ENCODE measurements at regions of chrX and their contacts with region 1.

Region 1: GRCh38 chrX:107672955-107673378 is 44.7 kb downstream of the PRPS1 start:
- DNase-seq: peak; percentile 87
- ATAC-seq: peak; percentile 52
- H3K4me3 Mint-ChIP-seq: peak overlapping the region; percentile 53
- H3K27ac Mint-ChIP-seq: peak overlapping the region; percentile 85
- H3K4me1 Mint-ChIP-seq: peaks cover 43% of the 10 kb centered on the region
- H3K27me3 Mint-ChIP-seq: no peaks in the 10 kb centered on the region

Region 2: DNA sequence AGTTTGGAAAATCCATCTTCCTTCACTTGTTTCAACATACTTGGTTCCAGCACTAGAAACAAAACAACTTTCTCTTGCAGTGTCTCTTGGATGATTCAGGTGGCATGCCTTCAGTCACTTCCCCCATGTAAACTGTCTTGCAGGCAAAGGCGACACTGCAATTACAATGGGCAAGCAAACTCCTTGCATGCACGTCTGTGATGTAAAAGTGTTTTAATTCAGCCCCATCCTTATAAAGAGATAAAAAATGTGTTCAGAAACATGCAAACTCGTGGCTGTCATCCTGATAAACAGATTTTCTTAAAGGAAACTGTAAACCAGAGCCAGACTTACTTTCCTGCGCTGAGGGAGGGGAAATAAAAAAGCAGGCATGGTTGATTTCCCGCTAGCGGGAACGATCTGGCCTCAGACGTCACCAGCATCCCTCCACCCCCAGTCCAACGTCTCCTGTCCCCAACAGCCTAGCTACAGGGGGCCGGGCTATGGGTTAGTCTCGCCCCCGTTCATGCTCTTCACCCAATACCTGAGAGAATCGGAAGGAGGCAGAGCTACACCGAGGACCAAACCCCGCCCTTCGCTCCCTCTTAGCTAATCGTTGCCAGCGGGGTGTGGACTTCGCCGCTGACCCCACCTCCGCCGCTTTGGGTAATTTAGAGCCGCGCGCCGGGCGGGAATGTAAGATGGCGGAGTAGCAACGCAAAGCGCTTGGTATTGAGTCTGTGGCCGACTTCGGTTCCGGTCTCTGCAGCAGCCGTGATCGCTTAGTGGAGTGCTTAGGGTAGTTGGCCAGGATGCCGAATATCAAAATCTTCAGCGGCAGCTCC is 44.9 kb before region 1 on chrX and contains the start of gene PRPS1:
- CTCF ChIA-PET with region 1: interaction called, 4 read pairs
- POLR2A ChIA-PET with region 1: interaction called, 20 read pairs
- intact Hi-C with region 1: loop called in 1 of 2 experiments (anchors 1 kb)
- DNase-seq: peak; percentile 93
- ATAC-seq: peak; percentile 99
- H3K4me3 Mint-ChIP-seq: peak within 1 kb of the TSS; percentile 89
- H3K27ac Mint-ChIP-seq: peak within 1 kb of the TSS; percentile 93
- H3K4me1 Mint-ChIP-seq: peaks cover 27% of the 10 kb centered on the region
- H3K27me3 Mint-ChIP-seq: no peaks in the 10 kb centered on the region
- total RNA-seq, gene PRPS1: 112 to 141 TPM

Region 3: GRCh38 chrX:107662145-107662544 is 10.8 kb before region 1 on chrX:
- CTCF ChIA-PET with region 1: interaction called, 11 read pairs
- POLR2A ChIA-PET with region 1: no interaction called
- intact Hi-C with region 1: no loop called
- DNase-seq: no peak
- ATAC-seq: no peak
- H3K4me3 Mint-ChIP-seq: no peak overlapping the region
- H3K27ac Mint-ChIP-seq: no peak overlapping the region
- H3K4me1 Mint-ChIP-seq: peaks cover 2% of the 10 kb centered on the region
- H3K27me3 Mint-ChIP-seq: no peaks in the 10 kb centered on the region

Region 4: DNA sequence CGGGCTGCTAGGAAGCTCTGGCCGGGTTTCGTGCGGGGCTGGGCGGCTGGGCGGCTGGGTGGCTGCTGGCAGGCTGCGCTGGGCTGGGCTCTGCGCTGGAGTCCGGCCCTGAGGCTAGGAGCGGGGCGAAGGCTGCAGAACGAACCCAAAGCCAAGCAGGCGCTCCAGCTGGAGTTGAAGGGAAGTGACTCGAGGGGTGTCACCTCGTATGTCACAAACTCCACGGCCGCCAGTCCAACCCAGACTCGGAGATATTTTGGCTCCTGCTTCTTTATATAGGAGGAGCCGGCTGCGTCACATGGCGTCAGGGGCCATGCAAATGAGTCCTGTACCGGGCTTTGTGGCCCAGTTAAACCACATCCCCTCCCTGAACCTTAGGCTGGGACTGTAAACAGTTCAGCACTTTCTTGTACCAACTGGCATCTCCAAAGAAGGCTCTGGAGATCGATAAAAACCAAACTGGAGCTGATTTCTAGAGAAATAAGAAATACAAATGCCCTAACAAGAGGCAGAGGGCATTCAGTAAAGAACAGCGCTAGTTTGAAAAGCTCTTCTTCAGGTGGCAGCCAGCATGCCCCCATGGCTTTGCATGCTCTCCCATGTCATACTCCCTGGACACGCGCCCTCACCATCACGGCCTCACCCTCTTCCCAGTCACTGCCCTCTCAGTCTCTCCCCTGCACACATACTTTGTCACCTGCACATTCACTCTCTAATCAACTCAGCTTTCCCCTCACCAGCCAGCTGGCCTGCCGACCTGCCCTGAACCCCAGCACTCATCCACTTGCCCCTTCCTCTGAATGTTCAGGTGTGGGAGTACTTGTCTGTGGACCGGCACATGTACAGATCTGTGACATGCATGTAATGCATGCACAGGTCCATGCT is 44.1 kb after region 1 on chrX:
- CTCF ChIA-PET with region 1: interaction called, 191 read pairs
- POLR2A ChIA-PET with region 1: interaction called, 144 read pairs
- intact Hi-C with region 1: loop called (anchors 1 kb)
- DNase-seq: peak; percentile 88
- ATAC-seq: peak; percentile 88
- H3K4me3 Mint-ChIP-seq: peak overlapping the region; percentile 90
- H3K27ac Mint-ChIP-seq: peak overlapping the region; percentile 92
- H3K4me1 Mint-ChIP-seq: peaks cover 43% of the 10 kb centered on the region
- H3K27me3 Mint-ChIP-seq: no peaks in the 10 kb centered on the region

Region 5: DNA sequence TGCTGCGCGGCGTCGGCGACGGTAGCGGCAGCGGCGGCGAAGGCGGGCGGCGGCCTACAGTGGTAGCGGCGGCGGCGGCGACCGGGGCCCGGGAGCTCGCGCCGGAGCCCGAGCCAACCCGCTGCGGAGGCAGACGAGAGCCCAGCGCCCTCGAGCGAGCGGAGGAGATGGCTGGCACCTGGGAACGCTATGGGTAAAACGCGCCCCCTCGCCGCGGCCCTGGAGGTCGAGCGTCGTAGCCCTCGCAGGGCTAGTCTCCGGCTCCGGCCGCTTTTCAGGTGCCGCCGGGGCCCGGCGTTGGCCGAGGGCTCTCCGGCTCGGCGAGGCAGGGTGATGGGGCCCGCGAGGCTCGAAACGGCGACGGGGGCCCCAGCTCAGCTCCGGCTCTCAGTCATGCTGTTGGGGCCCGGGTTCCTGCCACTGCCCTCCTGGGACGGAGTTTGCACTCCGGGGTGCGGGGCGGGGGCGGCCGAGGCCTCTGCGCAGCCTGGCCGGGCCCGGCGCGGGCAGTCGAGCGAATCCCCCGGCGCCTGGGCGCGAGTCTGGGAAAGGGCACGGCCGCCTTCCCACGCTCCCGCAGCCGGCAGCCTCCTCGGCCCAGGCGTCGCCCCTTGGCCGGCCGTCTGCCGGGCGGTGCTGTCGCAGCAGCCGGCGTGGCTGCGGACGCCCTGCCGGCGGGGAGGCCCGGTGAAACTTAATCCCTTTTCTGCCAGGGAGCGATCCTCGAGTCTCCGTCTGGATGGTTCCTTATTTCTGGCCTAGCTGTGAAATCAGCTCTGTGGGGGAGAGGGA is 153.5 kb after region 1 on chrX:
- CTCF ChIA-PET with region 1: no interaction called
- POLR2A ChIA-PET with region 1: no interaction called
- intact Hi-C with region 1: loop called in 1 of 2 experiments (anchors 1 kb)
- DNase-seq: peak; percentile 56
- ATAC-seq: peak; percentile 43
- H3K4me3 Mint-ChIP-seq: peak overlapping the region; percentile 75
- H3K27ac Mint-ChIP-seq: peak overlapping the region; percentile 78
- H3K4me1 Mint-ChIP-seq: peaks cover 46% of the 10 kb centered on the region
- H3K27me3 Mint-ChIP-seq: peaks cover 4% of the 10 kb centered on the region